Activated CD4-positive, alpha-beta memory T cell treated with anti-CD3 and anti-CD28 coated beads for 36 hours (primary cell): ENCODE measurements at regions of chr3 and their contacts with region 1.

Region 1: DNA sequence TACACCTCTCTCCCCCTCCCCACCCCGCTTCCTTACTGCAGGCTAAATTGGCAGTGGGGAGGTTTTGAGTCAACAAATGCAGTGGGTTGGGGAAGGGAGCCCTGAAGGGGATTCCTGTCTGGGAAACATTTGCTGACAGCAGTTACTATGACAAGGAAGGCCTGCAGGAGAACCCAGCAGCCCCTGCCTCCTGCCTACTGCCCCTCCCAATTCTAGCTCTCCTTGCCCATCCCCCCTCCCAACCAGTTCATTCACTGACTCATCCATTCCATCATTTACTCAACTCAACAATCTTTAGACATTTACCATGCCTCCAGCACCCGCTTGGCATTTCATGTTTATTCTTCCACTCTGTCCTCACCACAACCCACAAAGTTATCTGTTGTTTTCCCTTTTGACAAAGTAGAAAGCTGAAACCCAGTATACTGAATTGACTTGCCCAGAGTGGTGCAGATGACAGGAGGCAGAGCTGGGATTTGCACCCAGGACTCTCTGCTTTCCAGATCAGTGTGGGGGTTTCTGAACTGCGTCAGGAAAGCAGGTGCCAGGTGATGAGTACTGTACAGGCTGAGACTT is 75.0 kb downstream of the MAGEF1 start:
- DNase-seq: peak; percentile 76
- H3K4me3 Mint-ChIP-seq: no peak overlapping the region
- H3K27ac Mint-ChIP-seq: peak overlapping the region; percentile 53
- H3K4me1 Mint-ChIP-seq: peaks cover 3% of the 10 kb centered on the region
- H3K27me3 Mint-ChIP-seq: no peaks in the 10 kb centered on the region

Region 2: DNA sequence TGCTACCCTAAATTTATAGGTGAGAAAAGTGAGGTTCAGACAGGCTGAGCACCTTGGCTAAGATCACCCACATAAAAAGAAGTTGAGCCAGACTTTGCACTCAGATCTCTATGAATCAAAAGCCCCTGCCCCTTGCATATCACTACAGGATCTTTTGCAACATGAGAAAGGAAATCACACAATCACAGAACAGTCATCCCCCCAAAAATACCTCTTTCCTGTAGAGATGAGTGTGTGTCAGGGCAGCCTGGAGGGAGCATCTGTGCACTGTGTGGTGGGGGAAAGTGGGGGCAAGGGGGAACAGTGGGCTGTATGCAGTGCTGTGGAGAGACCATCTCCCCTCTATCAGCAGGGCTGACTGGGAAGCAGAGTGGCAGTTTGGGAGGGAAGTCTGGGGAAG is 28.6 kb before region 1 on chr3:
- CTCF ChIA-PET with region 1: no interaction called
- POLR2A ChIA-PET with region 1: no interaction called
- intact Hi-C with region 1: loop called (anchors 2 kb)
- DNase-seq: peak; percentile 17
- H3K4me3 Mint-ChIP-seq: no peak overlapping the region
- H3K27ac Mint-ChIP-seq: no peak overlapping the region
- H3K4me1 Mint-ChIP-seq: peaks cover 25% of the 10 kb centered on the region
- H3K27me3 Mint-ChIP-seq: peaks cover 20% of the 10 kb centered on the region

Region 3: GRCh38 chr3:184656829-184657681 is 20.2 kb after region 1 on chr3:
- CTCF ChIA-PET with region 1: no interaction called
- POLR2A ChIA-PET with region 1: interaction called, 11 read pairs
- intact Hi-C with region 1: loop called (anchors 1 kb)
- DNase-seq: peak; percentile 80
- H3K4me3 Mint-ChIP-seq: no peak overlapping the region
- H3K27ac Mint-ChIP-seq: peak overlapping the region; percentile 31
- H3K4me1 Mint-ChIP-seq: peaks cover 18% of the 10 kb centered on the region
- H3K27me3 Mint-ChIP-seq: no peaks in the 10 kb centered on the region

Region 4: GRCh38 chr3:184711493-184712247 is 74.8 kb after region 1 on chr3 and contains the start of gene MAGEF1:
- CTCF ChIA-PET with region 1: no interaction called
- POLR2A ChIA-PET with region 1: interaction called, 6 read pairs
- intact Hi-C with region 1: loop called (anchors 2 kb)
- DNase-seq: peak; percentile 87
- H3K4me3 Mint-ChIP-seq: peak within 1 kb of the TSS; percentile 92
- H3K27ac Mint-ChIP-seq: peak within 1 kb of the TSS; percentile 91
- H3K4me1 Mint-ChIP-seq: peaks cover 39% of the 10 kb centered on the region
- H3K27me3 Mint-ChIP-seq: no peaks in the 10 kb centered on the region
- total RNA-seq, gene MAGEF1: 20.6 to 22.5 TPM